ENCODE measurements at regions of chr7 and their contacts with region 1.

Region 1: DNA sequence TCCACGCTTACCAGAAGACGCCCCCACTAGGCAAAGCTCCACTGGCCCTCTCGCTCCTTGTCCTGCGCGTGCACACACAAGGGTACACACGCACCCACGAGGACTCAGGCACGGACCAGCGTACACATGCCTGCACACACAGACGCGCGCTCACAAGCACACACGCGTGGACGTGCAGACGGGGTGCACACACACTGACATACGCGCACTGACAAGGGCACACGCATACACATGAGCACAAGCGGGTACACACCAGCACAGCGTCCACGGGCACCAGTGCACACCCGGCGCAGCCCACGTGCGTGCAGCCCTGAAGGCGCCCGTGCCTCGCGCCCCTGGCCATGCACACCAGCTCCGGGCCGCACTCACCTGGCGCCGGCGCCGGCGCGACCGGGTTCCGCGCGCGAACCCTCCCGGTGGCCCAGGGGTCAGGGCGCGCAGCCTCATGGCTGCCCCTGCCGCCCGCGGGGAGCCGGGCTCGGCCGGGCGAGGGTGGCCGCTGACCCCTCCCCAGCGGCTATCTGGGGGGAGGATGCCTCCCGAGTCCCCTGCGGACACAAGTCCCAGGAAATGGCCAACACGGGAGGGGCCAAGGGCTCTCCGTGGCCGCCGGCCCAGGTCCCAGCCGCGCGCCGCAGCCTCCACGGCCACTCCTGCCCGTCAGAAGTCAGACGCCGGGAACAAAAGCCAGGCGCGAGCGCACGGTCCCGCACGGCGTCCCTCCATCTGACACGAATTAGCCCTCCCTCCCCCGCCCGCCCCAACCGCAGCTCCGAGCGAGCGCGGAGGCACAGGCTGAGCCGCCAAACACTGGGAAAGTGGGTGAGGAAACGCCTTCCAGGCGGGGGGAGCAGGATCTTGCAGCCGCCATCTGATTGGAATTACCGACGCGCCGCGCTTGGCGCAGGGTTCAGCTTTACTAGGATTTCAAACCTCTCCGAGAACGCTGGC is 45.0 kb downstream of the TNS3 start:
- DNase-seq: no peak
- H3K4me3 ChIP-seq: peak overlapping the region; percentile 49 to 66 (median 56)
- H3K27ac ChIP-seq: no peak overlapping the region
- H3K4me1 ChIP-seq: peaks cover 13 to 28% (median 19%) of the 10 kb centered on the region in 4 experiments
- H3K27me3 ChIP-seq: peaks cover 0 to 14% (median 12%) of the 10 kb centered on the region in 4 experiments; a peak in 5 of 7 replicates
- CTCF ChIP-seq: no peak
- EP300 ChIP-seq: no peak
- POLR2A ChIP-seq: no peak
- RAD21 ChIP-seq: no peak

Region 2: GRCh38 chr7:47405921-47406792 is 130.8 kb before region 1 on chr7:
- CTCF ChIA-PET with region 1: no interaction called
- POLR2A ChIA-PET with region 1: no interaction called
- DNase-seq: no peak
- H3K4me3 ChIP-seq: no peak overlapping the region
- H3K27ac ChIP-seq: no peak overlapping the region
- H3K4me1 ChIP-seq: peaks cover 0 to 10% (median 4%) of the 10 kb centered on the region in 4 experiments; a peak in 4 of 7 replicates
- H3K27me3 ChIP-seq: no peaks in the 10 kb centered on the region
- CTCF ChIP-seq: no peak
- EP300 ChIP-seq: no peak
- POLR2A ChIP-seq: no peak
- RAD21 ChIP-seq: no peak

Region 3: GRCh38 chr7:47516985-47517600 is 19.8 kb before region 1 on chr7:
- CTCF ChIA-PET with region 1: interaction called, 11 read pairs
- POLR2A ChIA-PET with region 1: no interaction called
- DNase-seq: no peak
- H3K4me3 ChIP-seq: no peak overlapping the region
- H3K27ac ChIP-seq: no peak overlapping the region
- H3K4me1 ChIP-seq: peaks cover 0 to 16% (median 9%) of the 10 kb centered on the region in 4 experiments; a peak in 6 of 7 replicates
- H3K27me3 ChIP-seq: no peaks in the 10 kb centered on the region
- CTCF ChIP-seq: no peak
- EP300 ChIP-seq: no peak
- POLR2A ChIP-seq: no peak
- RAD21 ChIP-seq: no peak

Measured in H1 (cell line).